WTC11 (cell line): ENCODE measurements at regions of chr12 and their contacts with region 1.

Region 1: DNA sequence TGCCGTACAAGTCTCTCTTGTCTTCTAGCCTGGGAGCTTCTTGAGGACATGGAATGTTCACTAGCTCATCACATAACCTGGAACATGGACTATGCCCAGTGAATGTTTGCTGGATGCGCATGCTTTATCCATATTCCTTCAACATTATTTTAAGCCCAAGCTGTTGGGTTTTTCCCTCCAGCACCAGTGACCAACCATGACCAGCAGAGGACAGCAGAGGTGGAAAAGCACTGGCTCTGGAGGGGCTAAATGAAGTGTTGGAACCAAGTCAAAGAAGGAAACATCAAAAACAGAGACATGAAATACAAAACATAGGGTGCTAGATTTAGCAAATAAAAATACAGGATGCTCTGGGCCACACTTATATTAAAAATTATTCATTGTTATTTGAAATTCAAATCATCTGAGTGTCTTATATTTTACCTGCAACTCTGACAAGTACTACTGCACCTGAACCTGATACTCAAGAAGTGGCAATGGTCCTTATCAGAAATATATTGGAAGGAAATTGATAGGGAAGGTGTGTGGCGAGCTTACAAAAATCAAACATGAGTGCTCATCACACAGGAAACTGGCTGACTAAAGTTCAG is 23.1 kb upstream of the HELB start:
- DNase-seq: no peak
- ATAC-seq: peak; percentile 83
- H3K4me3 Mint-ChIP-seq: no peak overlapping the region
- H3K27ac Mint-ChIP-seq: no peak overlapping the region
- H3K4me1 Mint-ChIP-seq: peaks cover 7% of the 10 kb centered on the region
- H3K27me3 Mint-ChIP-seq: no peaks in the 10 kb centered on the region
- CTCF ChIP-seq: no peak; the same call in 1 of the 2 replicates

Region 2: DNA sequence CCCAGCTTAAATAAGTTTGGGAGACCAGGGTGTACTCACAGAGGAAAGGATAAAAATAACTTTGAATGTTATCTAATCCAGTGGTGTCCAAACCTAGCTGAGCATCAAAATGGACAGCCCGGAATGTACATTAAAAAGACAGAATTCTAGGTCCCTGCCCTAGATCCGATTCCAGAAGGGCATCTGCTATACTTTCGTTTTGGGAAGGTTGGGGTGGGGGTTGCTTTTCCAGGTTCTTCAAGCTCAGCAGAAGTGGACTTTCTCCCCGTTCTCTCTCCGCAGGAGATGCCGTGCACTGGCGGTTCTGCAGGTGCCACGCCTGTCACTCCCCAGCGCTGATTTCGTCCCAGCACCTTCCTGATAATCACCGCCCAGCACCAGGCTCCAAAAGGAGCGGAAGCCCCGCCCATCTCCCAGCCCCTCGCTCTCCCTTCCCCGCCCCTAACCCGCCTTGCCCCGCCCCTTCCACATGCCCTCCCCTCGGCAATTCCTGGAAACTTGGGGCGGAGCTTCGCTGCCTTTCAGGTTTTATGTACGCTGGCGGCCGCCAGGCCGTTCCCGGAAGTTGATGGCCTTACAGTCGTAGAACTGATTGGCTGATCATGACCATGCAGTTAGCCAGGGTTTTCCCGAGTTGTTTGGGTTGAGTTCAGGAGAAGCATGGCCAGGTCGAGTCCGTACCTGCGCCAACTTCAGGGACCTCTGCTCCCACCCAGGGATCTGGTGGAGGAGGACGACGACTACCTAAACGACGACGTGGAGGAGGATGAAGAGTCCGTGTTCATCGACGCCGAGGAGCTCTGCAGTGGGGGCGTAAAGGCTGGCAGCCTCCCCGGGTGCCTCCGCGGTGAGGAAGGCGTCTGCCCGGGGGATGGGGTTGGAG is 23.0 kb after region 1 on chr12 and contains the start of gene HELB:
- CTCF ChIA-PET with region 1: interaction called, 12 read pairs
- POLR2A ChIA-PET with region 1: no interaction called
- DNase-seq: peak; percentile 99
- ATAC-seq: peak; percentile 97
- H3K4me3 Mint-ChIP-seq: peak within 1 kb of the TSS; percentile 99
- H3K27ac Mint-ChIP-seq: peak within 1 kb of the TSS; percentile 100
- H3K4me1 Mint-ChIP-seq: peaks cover 21% of the 10 kb centered on the region
- H3K27me3 Mint-ChIP-seq: peaks cover 16% of the 10 kb centered on the region
- CTCF ChIP-seq: no peak
- total RNA-seq, gene HELB: 9.7 to 12.5 TPM (median 10.2 TPM) in 3 replicates

Region 3: DNA sequence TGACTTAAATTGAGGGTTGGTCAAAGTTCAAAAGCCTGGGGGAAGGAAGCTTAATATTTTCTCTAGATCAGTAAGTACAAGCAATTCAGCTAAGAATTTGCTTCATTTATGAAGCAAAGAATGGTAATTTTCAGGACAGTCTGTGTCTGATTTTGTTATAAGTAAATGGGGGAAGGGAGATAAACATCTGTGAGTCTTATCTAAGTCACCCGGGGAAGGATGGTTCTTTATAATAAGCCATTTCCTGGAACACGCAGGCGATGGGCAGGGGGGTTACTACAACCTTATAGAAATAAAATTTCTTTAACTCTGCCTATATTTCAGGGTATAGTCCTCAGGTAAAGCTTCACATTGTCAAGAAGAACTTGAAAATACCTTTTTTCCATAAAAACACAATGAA is 66.0 kb after region 1 on chr12:
- CTCF ChIA-PET with region 1: no interaction called
- POLR2A ChIA-PET with region 1: no interaction called
- DNase-seq: no peak
- ATAC-seq: no peak
- H3K4me3 Mint-ChIP-seq: no peak overlapping the region
- H3K27ac Mint-ChIP-seq: no peak overlapping the region
- H3K4me1 Mint-ChIP-seq: no peaks in the 10 kb centered on the region
- H3K27me3 Mint-ChIP-seq: no peaks in the 10 kb centered on the region
- CTCF ChIP-seq: no peak